ENCODE measurements at regions of chr12 and their contacts with region 1.

Region 1: DNA sequence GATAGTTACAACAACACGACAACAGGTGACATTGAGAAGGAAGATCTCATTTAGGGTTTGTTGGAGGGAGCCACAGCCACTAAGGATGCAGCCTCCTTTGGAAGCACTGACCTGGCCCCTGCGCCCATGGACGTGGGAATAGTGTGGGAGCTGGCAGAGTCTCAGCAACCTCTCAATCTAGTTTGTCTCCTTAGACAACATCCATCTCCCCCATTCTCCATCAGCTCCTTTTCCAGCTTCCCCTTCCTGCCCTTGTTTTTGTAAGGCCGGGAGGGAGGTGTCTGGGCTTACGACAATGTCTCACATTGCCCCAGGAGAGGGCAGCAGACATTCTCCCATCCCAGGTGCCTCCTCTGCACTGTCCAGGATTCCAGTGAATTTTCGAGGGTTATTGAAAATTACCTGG is 170.2 kb upstream of the PZP start:
- DNase-seq: peak; percentile 50
- ATAC-seq: peak; percentile 95
- H3K4me3 ChIP-seq: no peak overlapping the region
- H3K27ac ChIP-seq: no peak overlapping the region
- H3K4me1 ChIP-seq: peaks cover 35% of the 10 kb centered on the region
- H3K27me3 ChIP-seq: no peaks in the 10 kb centered on the region
- CTCF ChIP-seq: peak; percentile 84
- EP300 ChIP-seq: no peak
- POLR2A ChIP-seq: no peak
- RAD21 ChIP-seq: peak; percentile 65

Region 2: DNA sequence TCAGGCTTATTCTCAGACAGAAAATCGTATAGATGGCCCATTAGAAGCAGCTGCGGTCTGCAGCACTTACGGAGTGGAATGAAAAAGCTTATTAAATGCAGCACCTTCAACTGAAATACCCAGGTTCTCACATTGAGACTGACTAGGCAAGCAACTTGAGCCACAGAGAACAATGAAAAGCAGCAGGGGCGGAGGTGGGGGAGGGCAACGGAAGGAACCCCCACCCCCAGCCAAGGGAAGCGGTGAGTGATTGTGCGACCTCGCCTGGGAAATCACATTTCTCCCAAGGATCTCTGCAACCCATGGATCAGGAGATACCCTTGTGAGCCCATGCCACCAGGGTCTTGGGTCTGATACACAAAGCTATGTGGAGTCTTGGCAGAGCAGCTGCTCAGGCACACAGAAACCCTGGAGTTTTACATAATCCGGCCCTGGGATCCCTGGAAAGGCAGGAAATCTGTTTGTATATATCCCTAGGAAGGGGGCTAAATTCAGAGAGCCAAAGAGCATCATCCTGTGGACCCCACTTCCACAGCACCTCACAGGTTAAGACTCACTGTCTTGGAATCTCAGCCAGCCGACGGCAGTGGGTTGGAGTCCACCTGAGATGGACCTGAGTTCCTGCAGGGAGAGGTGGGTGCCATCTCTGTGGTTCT is 208.3 kb before region 1 on chr12:
- CTCF ChIA-PET with region 1: no interaction called
- POLR2A ChIA-PET with region 1: no interaction called
- in situ Hi-C with region 1: no loop called
- intact Hi-C with region 1: no loop called
- DNase-seq: no peak
- ATAC-seq: no peak
- H3K4me3 ChIP-seq: no peak overlapping the region
- H3K27ac ChIP-seq: no peak overlapping the region
- H3K4me1 ChIP-seq: no peaks in the 10 kb centered on the region
- H3K27me3 ChIP-seq: no peaks in the 10 kb centered on the region
- CTCF ChIP-seq: no peak
- EP300 ChIP-seq: no peak
- POLR2A ChIP-seq: no peak
- RAD21 ChIP-seq: no peak

Region 3: GRCh38 chr12:9319842-9320173 is 58.6 kb before region 1 on chr12:
- CTCF ChIA-PET with region 1: no interaction called
- POLR2A ChIA-PET with region 1: no interaction called
- in situ Hi-C with region 1: loop called (anchors 10 kb)
- intact Hi-C with region 1: no loop called
- DNase-seq: no peak
- ATAC-seq: no peak
- H3K4me3 ChIP-seq: no peak overlapping the region
- H3K27ac ChIP-seq: no peak overlapping the region
- H3K4me1 ChIP-seq: peaks cover 24% of the 10 kb centered on the region
- H3K27me3 ChIP-seq: no peaks in the 10 kb centered on the region
- CTCF ChIP-seq: no peak
- EP300 ChIP-seq: no peak
- POLR2A ChIP-seq: no peak
- RAD21 ChIP-seq: no peak

Region 4: DNA sequence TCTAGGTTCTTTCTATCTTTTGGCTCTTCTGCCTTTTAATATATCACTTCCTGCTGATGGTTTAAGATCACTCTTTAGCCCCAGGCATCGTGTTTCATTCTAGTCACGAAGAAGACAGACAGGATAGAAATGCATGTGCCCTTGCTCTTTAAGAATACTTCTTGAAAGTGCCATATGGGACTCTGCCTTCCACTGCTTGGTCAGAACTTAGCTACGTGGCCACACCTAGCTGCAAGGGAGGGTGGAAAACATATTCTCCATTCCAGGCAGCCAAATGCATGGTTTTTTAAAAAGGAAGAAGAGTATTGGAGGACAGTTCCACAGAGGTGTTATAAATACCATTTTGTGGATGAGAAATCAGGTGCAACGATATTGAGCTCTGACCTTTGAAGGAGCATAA is 86.0 kb after region 1 on chr12:
- CTCF ChIA-PET with region 1: interaction called, 4 read pairs
- POLR2A ChIA-PET with region 1: interaction called, 3 read pairs
- in situ Hi-C with region 1: no loop called
- intact Hi-C with region 1: loop called (anchors 1 kb)
- DNase-seq: no peak
- ATAC-seq: no peak
- H3K4me3 ChIP-seq: no peak overlapping the region
- H3K27ac ChIP-seq: no peak overlapping the region
- H3K4me1 ChIP-seq: peaks cover 12% of the 10 kb centered on the region
- H3K27me3 ChIP-seq: no peaks in the 10 kb centered on the region
- CTCF ChIP-seq: no peak
- EP300 ChIP-seq: no peak
- POLR2A ChIP-seq: no peak
- RAD21 ChIP-seq: no peak

Measured in HepG2 (cell line).